ENCODE measurements at regions of chr18 and their contacts with region 1.

Region 1: GRCh38 chr18:37869051-37869450 is 303.5 kb upstream of the CELF4 start:
- DNase-seq: no peak
- ATAC-seq: no peak
- H3K4me3 ChIP-seq: no peak overlapping the region
- H3K27ac ChIP-seq: no peak overlapping the region
- H3K4me1 ChIP-seq: no peaks in the 10 kb centered on the region
- H3K27me3 ChIP-seq: no peaks in the 10 kb centered on the region

Region 2: DNA sequence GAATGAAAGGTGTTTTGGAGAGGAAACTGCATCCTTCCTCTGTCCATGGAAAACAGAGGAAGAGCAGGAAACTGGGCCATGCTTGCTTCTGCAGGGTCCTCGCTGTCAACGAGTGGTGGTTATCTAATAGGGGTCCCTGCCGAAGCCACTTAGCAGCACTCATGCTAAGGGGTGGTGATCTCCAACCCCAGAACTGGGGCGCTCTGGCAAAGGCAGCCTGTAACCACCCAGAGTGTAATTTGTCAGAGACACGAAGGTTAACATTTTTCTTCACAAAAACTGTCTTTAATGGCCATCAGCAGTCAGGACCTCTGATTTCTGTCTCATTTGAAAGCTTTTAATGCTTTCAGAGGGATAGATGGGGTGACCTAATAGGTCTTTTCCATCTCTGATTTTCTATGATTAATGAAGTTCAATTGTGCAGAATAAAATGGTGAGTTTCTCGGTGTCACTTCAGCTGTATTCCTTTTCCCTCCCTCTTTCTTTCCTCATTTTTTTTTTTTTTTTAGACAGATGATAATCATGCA is 72.2 kb before region 1 on chr18:
- intact Hi-C with region 1: loop called in 1 of 2 experiments (anchors 10 kb)
- DNase-seq: no peak
- ATAC-seq: no peak
- H3K4me3 ChIP-seq: no peak overlapping the region
- H3K27ac ChIP-seq: no peak overlapping the region
- H3K4me1 ChIP-seq: no peaks in the 10 kb centered on the region
- H3K27me3 ChIP-seq: no peaks in the 10 kb centered on the region

Region 3: GRCh38 chr18:39162013-39162827 is 1293.2 kb after region 1 on chr18:
- intact Hi-C with region 1: loop called in 1 of 2 experiments (anchors 10 kb)
- DNase-seq: no peak
- ATAC-seq: no peak
- H3K4me3 ChIP-seq: no peak overlapping the region
- H3K27ac ChIP-seq: no peak overlapping the region
- H3K4me1 ChIP-seq: no peaks in the 10 kb centered on the region
- H3K27me3 ChIP-seq: no peaks in the 10 kb centered on the region